HepG2 (cell line): ENCODE measurements at regions of chr1 and their contacts with region 1.

Region 1: DNA sequence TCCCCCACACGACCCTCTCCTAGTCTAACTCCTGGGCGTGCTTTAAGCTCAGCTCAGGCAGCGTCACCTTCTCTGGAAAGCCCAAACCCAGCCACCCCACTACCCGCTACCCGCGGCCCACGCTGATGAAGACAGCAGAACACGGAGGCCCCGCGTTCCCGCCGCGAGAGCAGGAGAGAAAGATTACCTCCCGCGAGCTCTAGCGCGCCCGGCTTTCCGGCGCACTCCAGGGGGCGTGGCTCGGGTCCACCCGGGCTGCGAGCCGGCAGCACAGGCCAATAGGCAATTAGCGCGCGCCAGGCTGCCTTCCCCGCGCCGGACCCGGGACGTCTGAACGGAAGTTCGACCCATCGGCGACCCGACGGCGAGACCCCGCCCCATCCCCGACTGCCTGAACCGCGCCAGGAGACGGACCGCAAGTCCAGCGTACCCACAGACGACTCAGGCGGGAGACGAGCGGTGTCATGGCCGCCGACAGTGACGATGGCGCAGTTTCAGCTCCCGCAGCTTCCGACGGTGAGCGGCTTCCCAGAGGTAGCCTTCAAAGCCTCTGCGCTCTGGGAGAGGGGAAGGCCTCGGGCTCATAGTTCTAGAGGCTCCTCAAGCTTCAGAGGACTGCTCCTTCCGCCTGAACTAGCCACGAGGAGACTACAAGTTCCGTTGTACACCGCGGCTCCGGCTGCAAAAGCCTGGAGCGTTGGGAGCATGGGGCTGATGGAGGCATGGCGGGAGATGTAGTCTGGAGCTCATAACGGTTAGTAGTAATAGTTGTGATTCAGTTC is at the starts of genes MUTYH and TOE1:
- DNase-seq: peak; percentile 87
- ATAC-seq: peak; percentile 86
- H3K4me3 ChIP-seq: peak within 1 kb of the TSS; percentile 68 to 83 (median 80)
- H3K27ac ChIP-seq: peak within 1 kb of the TSS; percentile 91
- H3K4me1 ChIP-seq: peaks cover 59% of the 10 kb centered on the region
- H3K27me3 ChIP-seq: no peaks in the 10 kb centered on the region; a peak in 1 of 5 replicates
- CTCF ChIP-seq: peak; percentile 24; the same call in 1 of the 2 replicates
- EP300 ChIP-seq: no peak
- POLR2A ChIP-seq: peak; percentile 87 to 90
- RAD21 ChIP-seq: peak; percentile 56
- total RNA-seq, gene MUTYH: 12.7 and 17.1 TPM in 2 replicates
- total RNA-seq, gene TOE1: 17.4 and 19.0 TPM in 2 replicates

Region 2: GRCh38 chr1:45011837-45012638 is 327.9 kb before region 1 on chr1 and contains the start of gene UROD:
- CTCF ChIA-PET with region 1: no interaction called
- POLR2A ChIA-PET with region 1: interaction called, 51 read pairs
- in situ Hi-C with region 1: no loop called
- intact Hi-C with region 1: no loop called
- DNase-seq: peak; percentile 94
- ATAC-seq: peak; percentile 75
- H3K4me3 ChIP-seq: peak within 1 kb of the TSS; percentile 73 to 95 (median 78)
- H3K27ac ChIP-seq: peak within 1 kb of the TSS; percentile 85
- H3K4me1 ChIP-seq: peaks cover 32% of the 10 kb centered on the region
- H3K27me3 ChIP-seq: no peaks in the 10 kb centered on the region; a peak in 1 of 5 replicates
- CTCF ChIP-seq: peak; percentile 4; the same call in 1 of the 2 replicates
- EP300 ChIP-seq: 0 out of 4 replicates have a peak, but pooled peaks of 1 of the 2 experiments have one; percentile 12
- POLR2A ChIP-seq: peak; percentile 91 to 96
- RAD21 ChIP-seq: no peak
- total RNA-seq, gene UROD: 171 and 243 TPM in 2 replicates

Region 3: GRCh38 chr1:45291716-45292115 is 48.3 kb before region 1 on chr1:
- CTCF ChIA-PET with region 1: no interaction called
- POLR2A ChIA-PET with region 1: no interaction called
- in situ Hi-C with region 1: no loop called
- intact Hi-C with region 1: no loop called
- DNase-seq: no peak
- ATAC-seq: no peak
- H3K4me3 ChIP-seq: no peak overlapping the region
- H3K27ac ChIP-seq: no peak overlapping the region
- H3K4me1 ChIP-seq: peaks cover 32% of the 10 kb centered on the region
- H3K27me3 ChIP-seq: no peaks in the 10 kb centered on the region
- CTCF ChIP-seq: no peak
- EP300 ChIP-seq: no peak
- POLR2A ChIP-seq: no peak
- RAD21 ChIP-seq: no peak

Region 4: GRCh38 chr1:45326627-45327623 is 13.1 kb before region 1 on chr1 and contains the start of gene HPDL:
- CTCF ChIA-PET with region 1: no interaction called
- POLR2A ChIA-PET with region 1: interaction called, 13 read pairs
- in situ Hi-C with region 1: no loop called
- intact Hi-C with region 1: no loop called
- DNase-seq: no peak
- ATAC-seq: no peak
- H3K4me3 ChIP-seq: no peak within 1 kb of the TSS
- H3K27ac ChIP-seq: no peak within 1 kb of the TSS
- H3K4me1 ChIP-seq: no peaks in the 10 kb centered on the region; the same call in 1 of the 2 replicates
- H3K27me3 ChIP-seq: no peaks in the 10 kb centered on the region
- CTCF ChIP-seq: no peak
- EP300 ChIP-seq: no peak
- POLR2A ChIP-seq: no peak
- RAD21 ChIP-seq: no peak
- total RNA-seq, gene HPDL: not detected in 2 replicates

Region 5: GRCh38 chr1:45423906-45424678 is 84.1 kb after region 1 on chr1:
- CTCF ChIA-PET with region 1: no interaction called
- POLR2A ChIA-PET with region 1: no interaction called
- in situ Hi-C with region 1: no loop called
- intact Hi-C with region 1: no loop called
- DNase-seq: no peak
- ATAC-seq: no peak
- H3K4me3 ChIP-seq: no peak overlapping the region
- H3K27ac ChIP-seq: no peak overlapping the region
- H3K4me1 ChIP-seq: 0 out of 2 replicates have a peak, but pooled peaks cover 5% of the 10 kb centered on the region
- H3K27me3 ChIP-seq: no peaks in the 10 kb centered on the region; a peak in 1 of 5 replicates
- CTCF ChIP-seq: no peak
- EP300 ChIP-seq: no peak
- POLR2A ChIP-seq: no peak
- RAD21 ChIP-seq: no peak

Region 6: DNA sequence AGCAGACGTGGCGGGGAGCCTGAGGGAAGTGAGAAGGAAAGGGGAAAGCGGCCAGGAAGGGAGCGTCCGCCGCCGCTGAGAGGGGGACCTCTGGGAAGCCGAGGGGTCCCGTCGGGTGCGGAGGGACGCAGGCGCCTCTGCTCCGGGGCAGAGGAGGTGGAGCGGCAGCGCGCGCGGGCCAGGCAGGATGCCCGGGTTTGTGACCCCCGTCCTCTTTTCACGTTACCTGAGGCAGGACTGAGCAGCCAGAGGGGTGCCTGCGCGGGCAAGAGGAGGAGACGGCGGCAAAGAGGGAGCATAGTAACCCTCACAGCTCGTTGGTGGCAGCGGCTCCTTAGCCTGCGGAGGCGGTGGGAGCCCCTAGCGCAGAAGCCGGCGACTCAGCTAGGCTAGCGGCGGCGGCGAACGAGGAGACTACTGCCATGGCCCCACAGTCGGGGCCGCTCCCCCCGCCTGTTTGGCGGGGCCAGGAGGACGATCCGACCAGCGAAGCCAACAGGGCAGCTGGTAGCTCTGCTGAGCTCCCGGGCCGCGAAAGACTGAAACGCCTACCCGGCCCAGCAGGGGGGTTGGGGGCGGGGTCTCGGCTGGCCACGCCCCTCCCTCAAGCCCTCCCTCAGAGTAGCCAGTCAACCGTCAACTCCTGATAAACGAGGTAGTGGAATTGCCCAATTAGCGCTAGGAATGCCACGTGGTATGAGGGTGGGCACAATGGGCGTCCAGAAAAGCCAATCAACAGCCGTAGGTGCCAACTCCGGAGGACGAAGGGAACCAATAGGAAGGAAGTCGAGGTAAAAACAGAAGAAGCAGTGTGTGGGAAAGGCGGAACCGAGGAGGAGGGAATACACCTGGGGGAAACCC is 150.9 kb after region 1 on chr1 and contains the start of gene TESK2:
- CTCF ChIA-PET with region 1: no interaction called
- POLR2A ChIA-PET with region 1: interaction called, 51 read pairs
- in situ Hi-C with region 1: no loop called
- intact Hi-C with region 1: loop called (anchors 5 kb)
- DNase-seq: peak; percentile 100
- ATAC-seq: peak; percentile 93
- H3K4me3 ChIP-seq: peak within 1 kb of the TSS; percentile 90 to 98 (median 93)
- H3K27ac ChIP-seq: peak within 1 kb of the TSS; percentile 78
- H3K4me1 ChIP-seq: peaks cover 29% of the 10 kb centered on the region
- H3K27me3 ChIP-seq: no peaks in the 10 kb centered on the region; a peak in 1 of 5 replicates
- CTCF ChIP-seq: no peak; the same call in 1 of the 2 replicates
- EP300 ChIP-seq: no peak
- POLR2A ChIP-seq: peak; percentile 90
- RAD21 ChIP-seq: peak; percentile 42; the same call in 1 of the 2 replicates
- total RNA-seq, gene TESK2: 5.5 and 6.9 TPM in 2 replicates